Activated CD8-positive, alpha-beta T cell treated with anti-CD3 and anti-CD28 coated beads for 36 hours (primary cell): ENCODE measurements at regions of chr5 and their contacts with region 1.

Region 1: GRCh38 chr5:133111299-133111698 is 59.5 kb downstream of the HSPA4 start:
- DNase-seq: peak; percentile 88
- ATAC-seq: peak; percentile 76
- H3K4me3 Mint-ChIP-seq: no peak overlapping the region
- H3K27ac Mint-ChIP-seq: no peak overlapping the region
- H3K4me1 Mint-ChIP-seq: peaks cover 29% of the 10 kb centered on the region
- H3K27me3 Mint-ChIP-seq: no peaks in the 10 kb centered on the region
- CTCF ChIP-seq: peak; percentile 96

Region 2: DNA sequence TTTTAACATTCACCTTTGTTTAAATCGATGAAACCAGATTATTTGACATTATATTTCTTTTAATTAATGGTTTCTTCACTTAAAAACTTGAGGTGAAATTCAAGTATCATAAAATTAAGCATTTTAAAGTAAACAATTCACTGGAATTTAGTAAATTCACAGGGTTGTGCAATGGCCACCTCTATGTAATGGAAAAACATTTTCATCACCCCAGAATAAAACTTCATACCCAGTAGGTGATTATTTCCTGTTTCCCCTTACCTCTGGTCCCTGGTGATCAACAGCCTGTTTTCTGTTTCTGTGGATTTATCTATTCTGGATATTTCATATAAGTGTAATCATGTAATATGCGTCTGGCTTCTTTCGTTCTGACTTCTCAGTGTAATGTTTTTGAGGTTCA is 32.3 kb before region 1 on chr5:
- CTCF ChIA-PET with region 1: no interaction called
- POLR2A ChIA-PET with region 1: no interaction called
- intact Hi-C with region 1: no loop called
- DNase-seq: no peak
- ATAC-seq: no peak
- H3K4me3 Mint-ChIP-seq: no peak overlapping the region
- H3K27ac Mint-ChIP-seq: peak overlapping the region; percentile 65
- H3K4me1 Mint-ChIP-seq: peaks cover 42% of the 10 kb centered on the region
- H3K27me3 Mint-ChIP-seq: no peaks in the 10 kb centered on the region
- CTCF ChIP-seq: no peak

Region 3: DNA sequence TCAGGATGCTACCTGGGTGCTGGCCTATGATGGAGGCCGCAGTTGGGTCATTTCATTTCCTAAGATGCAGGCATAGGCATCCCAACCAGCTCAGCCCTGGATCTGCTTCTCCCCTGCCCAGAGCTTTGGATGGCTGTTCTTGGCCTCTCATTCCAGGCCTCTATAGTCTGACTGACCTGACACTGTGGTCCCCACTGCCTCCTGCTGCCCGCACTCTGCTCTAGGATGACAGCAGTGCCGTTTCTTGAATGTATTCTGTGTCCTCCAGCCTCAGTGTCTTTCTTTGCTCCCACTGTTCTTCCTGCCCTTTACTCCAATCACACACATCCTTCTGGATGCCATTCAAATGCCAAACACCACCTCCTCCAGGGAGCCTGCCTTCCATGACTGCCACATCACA is 176.2 kb after region 1 on chr5:
- CTCF ChIA-PET with region 1: interaction called, 13 read pairs
- POLR2A ChIA-PET with region 1: no interaction called
- intact Hi-C with region 1: loop called (anchors 5 kb)
- DNase-seq: peak; percentile 66
- ATAC-seq: peak; percentile 60
- H3K4me3 Mint-ChIP-seq: no peak overlapping the region
- H3K27ac Mint-ChIP-seq: no peak overlapping the region
- H3K4me1 Mint-ChIP-seq: no peaks in the 10 kb centered on the region
- H3K27me3 Mint-ChIP-seq: no peaks in the 10 kb centered on the region
- CTCF ChIP-seq: peak; percentile 22

Region 4: DNA sequence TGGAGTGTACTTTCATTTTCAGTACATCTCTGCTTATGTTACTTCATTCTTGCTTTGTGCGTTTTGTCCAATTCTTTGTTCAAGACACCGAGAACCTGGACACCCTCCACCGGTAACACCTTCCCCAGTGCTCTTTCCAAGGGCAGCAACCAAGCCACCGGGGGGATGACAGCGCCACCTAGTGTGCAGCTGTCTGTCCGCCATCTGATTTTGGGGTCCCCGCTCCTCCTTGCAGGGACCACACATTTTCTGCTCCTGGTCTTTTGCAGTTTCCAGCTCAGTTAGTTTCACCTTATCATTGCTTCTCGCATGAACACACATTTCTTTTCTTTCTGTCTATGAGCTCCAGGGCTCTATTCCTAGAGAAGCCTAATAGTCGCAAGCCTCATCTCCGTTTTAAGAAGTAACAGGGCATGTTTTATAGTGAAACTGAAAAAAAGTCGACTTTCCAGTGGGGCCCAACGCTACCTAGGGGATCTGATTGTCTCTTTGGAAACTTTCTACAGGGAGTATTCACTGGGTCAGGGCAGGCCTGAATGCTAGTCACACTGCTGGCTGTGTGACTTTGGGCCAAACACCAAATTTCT is 349.0 kb after region 1 on chr5:
- CTCF ChIA-PET with region 1: interaction called, 6 read pairs
- POLR2A ChIA-PET with region 1: no interaction called
- intact Hi-C with region 1: loop called (anchors 2 kb)
- DNase-seq: peak; percentile 65
- ATAC-seq: peak; percentile 56
- H3K4me3 Mint-ChIP-seq: no peak overlapping the region
- H3K27ac Mint-ChIP-seq: no peak overlapping the region
- H3K4me1 Mint-ChIP-seq: no peaks in the 10 kb centered on the region
- H3K27me3 Mint-ChIP-seq: no peaks in the 10 kb centered on the region
- CTCF ChIP-seq: peak; percentile 85